AG04450 (cell line): ENCODE measurements at regions of chr15 and their contacts with region 1.

Region 1: GRCh38 chr15:51536965-51537574 is 85.5 kb downstream of the DMXL2 start:
- DNase-seq: no peak
- H3K4me3 ChIP-seq: no peak overlapping the region
- H3K27ac ChIP-seq: no peak overlapping the region
- H3K27me3 ChIP-seq: no peaks in the 10 kb centered on the region
- CTCF ChIP-seq: peak; percentile 77

Region 2: GRCh38 chr15:51093839-51094605 is 443.0 kb before region 1 on chr15:
- CTCF ChIA-PET with region 1: no interaction called
- POLR2A ChIA-PET with region 1: no interaction called
- DNase-seq: no peak
- H3K4me3 ChIP-seq: peak overlapping the region; percentile 58
- H3K27ac ChIP-seq: no peak overlapping the region
- H3K27me3 ChIP-seq: peaks cover 49% of the 10 kb centered on the region
- CTCF ChIP-seq: no peak

Region 3: DNA sequence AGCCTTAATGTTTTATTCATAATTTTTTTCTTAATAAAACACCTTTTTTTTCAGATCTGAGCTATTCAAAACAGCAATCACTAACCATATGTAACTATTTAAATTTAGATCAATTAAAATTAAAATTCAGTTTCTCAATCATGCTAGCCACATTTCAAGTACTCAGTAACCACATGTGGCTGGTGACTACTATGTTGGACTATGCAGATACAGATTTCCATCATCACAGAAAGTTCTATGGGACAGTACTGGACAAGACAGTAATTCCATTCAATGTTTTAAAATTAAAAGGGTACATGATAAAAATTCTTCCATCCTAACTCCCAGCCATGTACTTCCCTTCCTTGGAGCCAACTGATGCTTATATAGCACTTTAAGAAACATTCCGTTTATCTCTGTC is 76.3 kb before region 1 on chr15:
- CTCF ChIA-PET with region 1: no interaction called
- POLR2A ChIA-PET with region 1: no interaction called
- DNase-seq: no peak
- H3K4me3 ChIP-seq: no peak overlapping the region
- H3K27ac ChIP-seq: no peak overlapping the region
- H3K27me3 ChIP-seq: no peaks in the 10 kb centered on the region
- CTCF ChIP-seq: no peak

Region 4: DNA sequence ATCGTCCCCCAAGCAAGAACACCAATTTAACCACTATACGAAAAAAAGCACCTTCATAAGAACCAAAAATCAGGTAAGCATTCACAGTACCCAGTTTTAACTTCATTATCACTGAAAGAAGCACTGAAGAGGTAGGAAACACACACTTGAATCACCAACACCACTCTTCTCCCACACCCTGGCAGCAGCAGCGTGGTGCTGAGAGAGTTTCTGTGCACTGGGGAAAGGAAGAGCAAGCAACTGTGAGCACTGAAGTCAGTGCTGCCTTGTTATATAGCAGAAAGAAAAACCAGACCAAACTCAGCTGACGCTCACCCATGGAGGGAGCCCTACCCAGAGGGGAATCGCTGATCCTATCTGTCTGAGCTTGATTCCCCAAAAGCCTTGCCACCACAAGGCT is 12.7 kb before region 1 on chr15:
- CTCF ChIA-PET with region 1: interaction called, 25 read pairs
- POLR2A ChIA-PET with region 1: no interaction called
- DNase-seq: no peak
- H3K4me3 ChIP-seq: no peak overlapping the region
- H3K27ac ChIP-seq: no peak overlapping the region
- H3K27me3 ChIP-seq: no peaks in the 10 kb centered on the region
- CTCF ChIP-seq: no peak

Region 5: DNA sequence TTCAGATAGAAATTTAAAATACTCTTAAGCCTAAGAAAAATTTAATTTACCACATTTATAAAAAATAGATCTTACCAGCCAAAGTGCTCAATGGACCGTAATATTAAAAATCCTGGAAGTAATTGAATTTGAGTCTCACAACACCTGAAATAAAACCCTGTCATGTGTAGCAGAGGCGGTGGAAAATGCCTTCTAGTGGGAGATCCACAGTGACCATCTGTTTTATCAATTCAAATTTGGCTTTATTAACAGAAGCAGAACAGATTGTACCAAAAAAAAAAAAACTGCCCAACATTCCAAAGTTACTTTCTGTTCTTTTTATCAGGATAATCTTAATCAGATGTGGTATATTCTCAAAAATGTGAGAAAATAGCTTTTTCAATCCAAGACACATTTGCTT is 13.8 kb after region 1 on chr15:
- CTCF ChIA-PET with region 1: interaction called, 19 read pairs
- POLR2A ChIA-PET with region 1: no interaction called
- DNase-seq: no peak
- H3K4me3 ChIP-seq: no peak overlapping the region
- H3K27ac ChIP-seq: no peak overlapping the region
- H3K27me3 ChIP-seq: no peaks in the 10 kb centered on the region
- CTCF ChIP-seq: no peak

Region 6: DNA sequence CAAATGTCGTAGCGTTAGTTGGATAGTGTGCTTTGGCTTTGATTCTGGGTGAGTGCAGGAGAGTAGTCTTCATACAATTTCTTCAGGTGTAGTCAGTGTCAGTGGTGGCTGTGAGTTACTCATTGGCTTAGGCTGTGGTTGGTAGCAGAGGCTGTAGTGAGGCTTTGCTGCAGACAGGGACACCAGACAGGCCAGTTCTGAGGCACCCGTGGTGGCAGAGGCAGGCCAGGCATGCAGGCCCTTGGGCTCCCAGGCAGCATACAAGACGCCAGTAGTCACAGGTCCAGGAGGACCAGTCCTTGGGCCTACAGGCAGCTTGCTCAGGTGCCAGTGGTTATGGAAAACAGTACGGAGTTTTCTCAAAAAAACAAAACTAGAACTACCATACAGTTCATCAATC is 24.2 kb after region 1 on chr15:
- CTCF ChIA-PET with region 1: interaction called, 17 read pairs
- POLR2A ChIA-PET with region 1: no interaction called
- DNase-seq: no peak
- H3K4me3 ChIP-seq: no peak overlapping the region
- H3K27ac ChIP-seq: no peak overlapping the region
- H3K27me3 ChIP-seq: no peaks in the 10 kb centered on the region
- CTCF ChIP-seq: no peak

Region 7: GRCh38 chr15:51622604-51623370 is 85.7 kb after region 1 on chr15 and contains the start of gene DMXL2:
- CTCF ChIA-PET with region 1: interaction called, 40 read pairs
- POLR2A ChIA-PET with region 1: no interaction called
- DNase-seq: peak; percentile 71
- H3K4me3 ChIP-seq: peak within 1 kb of the TSS; percentile 79
- H3K27ac ChIP-seq: peak within 1 kb of the TSS; percentile 73
- H3K27me3 ChIP-seq: peaks cover 6% of the 10 kb centered on the region
- CTCF ChIP-seq: no peak
- polyA plus RNA-seq, gene DMXL2: 18.2 and 18.6 TPM in 2 replicates